ENCODE measurements at regions of chr16 and their contacts with region 1.

Region 1: DNA sequence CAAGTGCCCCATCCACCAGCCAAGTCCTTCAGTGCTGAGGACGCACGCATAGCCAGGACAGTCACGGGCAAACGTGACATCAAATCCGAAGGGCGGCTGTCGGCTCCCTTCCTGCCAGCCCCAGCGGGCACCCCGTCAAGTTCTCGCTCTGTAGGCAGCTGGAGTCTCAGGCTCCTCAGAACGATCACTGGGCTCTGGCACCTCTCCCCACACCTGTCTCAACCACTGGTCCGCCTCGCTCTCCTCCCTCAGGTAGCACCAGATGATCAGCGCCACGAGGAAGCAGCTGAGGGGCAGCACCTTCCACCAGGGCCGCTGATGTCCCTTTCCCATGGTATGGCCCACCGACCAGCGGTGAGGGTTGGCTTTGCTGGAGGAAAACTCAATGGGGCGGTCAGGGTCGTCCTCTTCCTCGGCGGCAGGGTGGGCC is 421 bp downstream of the UQCC4 start:
- DNase-seq: peak in 1 of 9 donors; percentile 30
- ATAC-seq: no peak
- H3K4me3 ChIP-seq: peak overlapping the region; percentile 66
- H3K4me3 Mint-ChIP-seq: peak overlapping the region; percentile 90 to 94 (median 92)
- H3K27ac ChIP-seq: peak overlapping the region; percentile 95
- H3K27ac Mint-ChIP-seq: peak overlapping the region; percentile 25 to 98 (median 98)
- H3K4me1 ChIP-seq: peaks cover 6 to 11% of the 10 kb centered on the region in 2 donors
- H3K4me1 Mint-ChIP-seq: peaks cover 4 to 31% (median 20%) of the 10 kb centered on the region in 7 donors
- H3K27me3 ChIP-seq: no peaks in the 10 kb centered on the region
- H3K27me3 Mint-ChIP-seq: peaks cover 0 to 5% (median 0%) of the 10 kb centered on the region in 5 donors

Region 2: DNA sequence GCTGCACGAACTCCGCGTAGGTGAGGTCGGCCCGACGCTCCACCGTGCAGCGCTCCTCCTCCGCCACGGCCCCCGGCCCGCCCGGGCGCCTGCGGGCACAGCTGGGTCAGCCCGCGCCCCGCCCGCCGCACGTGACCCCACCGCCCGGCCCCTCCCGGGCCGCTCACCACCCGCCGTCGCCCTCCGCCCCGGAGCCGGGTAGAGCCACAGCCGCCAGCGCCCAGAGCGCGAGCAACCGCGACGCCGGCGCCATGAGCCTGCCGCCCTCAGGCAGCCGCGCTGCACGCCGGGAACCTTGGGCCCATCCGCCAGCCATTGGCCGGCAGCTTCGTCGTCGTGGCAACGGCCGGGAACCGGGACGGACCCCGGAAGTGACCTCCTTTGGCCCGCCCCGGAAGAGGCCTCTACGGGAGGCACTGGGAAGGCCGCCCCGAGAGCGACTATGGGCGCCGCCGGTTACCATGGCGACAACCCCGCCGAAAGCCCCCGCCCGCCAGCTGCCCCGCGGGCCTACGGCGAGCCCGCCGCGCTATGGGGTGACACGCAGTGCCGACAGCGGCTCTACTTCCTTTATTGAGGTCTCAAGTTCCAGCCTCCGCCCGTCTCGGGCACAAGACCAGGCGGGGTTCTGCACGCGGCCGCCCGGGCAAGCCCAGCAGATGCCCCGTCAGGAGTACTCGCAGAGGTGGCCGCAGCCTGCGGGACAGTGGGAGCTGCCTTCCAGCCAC is 735.9 kb before region 1 on chr16 and contains the start of gene JMJD8:
- CTCF ChIA-PET with region 1: no interaction called
- POLR2A ChIA-PET with region 1: no interaction called
- intact Hi-C with region 1: loop called in 1 of 2 experiments (anchors 5 kb)
- DNase-seq: peak; percentile 88 to 97 (median 91)
- ATAC-seq: peak; percentile 75
- H3K4me3 ChIP-seq: peak within 1 kb of the TSS; percentile 52
- H3K4me3 Mint-ChIP-seq: peak within 1 kb of the TSS; percentile 58 to 87 (median 76)
- H3K27ac ChIP-seq: peak within 1 kb of the TSS; percentile 78
- H3K27ac Mint-ChIP-seq: peak within 1 kb of the TSS in 6 of 9 donors; percentile 38 to 82 (median 58)
- H3K4me1 ChIP-seq: peaks cover 9 to 36% of the 10 kb centered on the region in 2 donors
- H3K4me1 Mint-ChIP-seq: peaks cover 10 to 31% (median 22%) of the 10 kb centered on the region in 7 donors
- H3K27me3 ChIP-seq: no peaks in the 10 kb centered on the region
- H3K27me3 Mint-ChIP-seq: no peaks in the 10 kb centered on the region
- total RNA-seq, gene JMJD8: 26.8 to 48.1 (median 37.2) TPM

Region 3: GRCh38 chr16:1395444-1396031 is 24.6 kb before region 1 on chr16:
- CTCF ChIA-PET with region 1: no interaction called
- POLR2A ChIA-PET with region 1: no interaction called
- intact Hi-C with region 1: no loop called
- DNase-seq: no peak
- ATAC-seq: no peak
- H3K4me3 ChIP-seq: no peak overlapping the region
- H3K4me3 Mint-ChIP-seq: no peak overlapping the region
- H3K27ac ChIP-seq: no peak overlapping the region
- H3K27ac Mint-ChIP-seq: no peak overlapping the region
- H3K4me1 ChIP-seq: no peaks in the 10 kb centered on the region
- H3K4me1 Mint-ChIP-seq: peaks cover 0 to 2% (median 0%) of the 10 kb centered on the region in 7 donors
- H3K27me3 ChIP-seq: no peaks in the 10 kb centered on the region
- H3K27me3 Mint-ChIP-seq: no peaks in the 10 kb centered on the region

Region 4: DNA sequence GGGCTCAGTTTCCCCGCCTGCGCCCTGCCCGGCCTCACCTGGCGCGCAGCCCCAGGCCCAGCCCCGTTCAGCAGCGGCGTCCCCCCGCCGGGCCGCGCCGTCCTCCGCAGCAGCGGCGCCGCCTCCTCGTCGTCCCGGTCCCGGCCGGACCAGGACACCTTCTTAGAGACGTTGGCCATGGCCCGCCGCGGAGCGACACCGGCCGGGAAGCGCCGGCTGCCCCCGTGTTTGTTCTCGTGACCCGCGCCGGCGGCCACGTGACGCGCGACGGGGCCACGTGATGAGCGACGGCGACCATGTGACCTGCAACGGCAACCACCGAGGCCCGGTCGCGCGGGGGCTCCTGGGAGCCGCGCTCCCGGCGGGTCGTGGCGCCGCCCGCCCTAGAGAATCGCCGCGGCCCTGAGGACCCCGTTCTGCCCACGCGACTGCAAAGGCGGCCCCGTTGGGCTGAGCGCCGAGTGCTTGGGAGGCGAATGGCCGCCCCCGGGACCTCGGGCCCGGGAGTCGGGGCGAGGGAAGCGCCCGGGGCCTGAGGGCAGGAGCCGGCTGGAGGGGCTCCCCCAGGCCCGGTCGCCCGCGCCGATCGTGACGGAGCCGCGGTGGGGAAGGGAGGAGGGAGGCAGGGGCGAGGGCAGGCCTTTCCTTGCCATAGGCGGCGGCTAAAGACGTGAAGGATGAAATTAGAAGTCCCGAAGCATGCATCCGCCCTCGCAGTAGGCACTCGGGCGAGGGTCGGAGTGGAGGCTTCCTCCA is 54.8 kb after region 1 on chr16 and contains the start of gene CLCN7:
- CTCF ChIA-PET with region 1: no interaction called
- POLR2A ChIA-PET with region 1: interaction called, 3 read pairs
- intact Hi-C with region 1: loop called (anchors 1 to 2 kb)
- DNase-seq: peak; percentile 79 to 95 (median 84)
- ATAC-seq: peak; percentile 91
- H3K4me3 ChIP-seq: peak within 1 kb of the TSS; percentile 67
- H3K4me3 Mint-ChIP-seq: peak within 1 kb of the TSS; percentile 80 to 90 (median 85)
- H3K27ac ChIP-seq: peak within 1 kb of the TSS; percentile 100
- H3K27ac Mint-ChIP-seq: peak within 1 kb of the TSS; percentile 77 to 95 (median 88)
- H3K4me1 ChIP-seq: peaks cover 13 to 20% of the 10 kb centered on the region in 2 donors
- H3K4me1 Mint-ChIP-seq: peaks cover 18 to 52% (median 42%) of the 10 kb centered on the region in 7 donors
- H3K27me3 ChIP-seq: no peaks in the 10 kb centered on the region
- H3K27me3 Mint-ChIP-seq: no peaks in the 10 kb centered on the region
- total RNA-seq, gene CLCN7: 74.8 to 140 (median 115) TPM

Region 5: DNA sequence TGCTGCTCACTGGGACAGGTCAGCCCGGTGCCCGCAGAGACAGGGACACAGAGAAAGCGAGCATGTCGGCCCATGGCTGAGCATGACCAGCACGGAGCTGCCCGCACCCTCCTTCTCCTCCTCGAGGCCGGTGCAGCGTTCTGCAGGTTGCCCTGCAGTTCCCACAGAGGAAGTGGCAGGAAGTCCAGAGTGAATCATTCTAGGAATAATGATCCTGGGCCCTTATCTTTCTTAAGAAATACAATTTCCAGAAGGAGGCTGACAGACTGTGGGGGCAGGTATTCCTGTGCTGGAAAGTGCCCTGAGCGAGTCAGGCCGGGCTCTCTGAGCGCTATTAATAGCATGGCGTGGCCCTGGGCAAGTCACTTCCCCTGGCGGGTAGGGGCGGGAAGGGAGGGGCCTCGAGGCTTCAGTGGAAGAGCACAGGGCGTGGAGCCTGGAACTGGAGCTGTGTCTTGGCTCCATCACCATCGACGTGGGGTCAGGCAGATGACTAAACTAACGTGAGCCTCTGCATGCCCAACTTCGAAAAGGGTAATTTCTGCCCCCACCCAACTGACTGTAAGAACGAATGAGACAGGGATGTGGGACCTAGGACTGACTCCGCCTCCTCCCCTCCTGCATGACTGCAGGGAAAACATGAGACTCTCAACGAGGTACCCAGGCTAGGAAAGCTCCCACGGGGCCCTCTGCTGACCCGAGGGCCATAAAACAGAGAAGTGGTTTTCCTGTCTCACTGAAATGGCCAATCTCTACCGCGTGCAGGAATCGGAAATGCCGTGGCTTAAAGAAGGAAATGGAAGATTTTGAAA is 123.2 kb after region 1 on chr16:
- CTCF ChIA-PET with region 1: no interaction called
- POLR2A ChIA-PET with region 1: interaction called, 5 read pairs
- intact Hi-C with region 1: loop called in 1 of 2 experiments (anchors 2 kb)
- DNase-seq: peak in 5 of 9 donors; percentile 23 to 59 (median 38)
- ATAC-seq: peak; percentile 81
- H3K4me3 ChIP-seq: no peak overlapping the region
- H3K4me3 Mint-ChIP-seq: peak overlapping the region; percentile 70 to 86 (median 76)
- H3K27ac ChIP-seq: peak overlapping the region; percentile 51
- H3K27ac Mint-ChIP-seq: peak overlapping the region; percentile 71 to 95 (median 86)
- H3K4me1 ChIP-seq: peaks cover 13 to 70% of the 10 kb centered on the region in 2 donors
- H3K4me1 Mint-ChIP-seq: peaks cover 51 to 89% (median 66%) of the 10 kb centered on the region in 7 donors
- H3K27me3 ChIP-seq: no peaks in the 10 kb centered on the region
- H3K27me3 Mint-ChIP-seq: no peaks in the 10 kb centered on the region

Region 6: DNA sequence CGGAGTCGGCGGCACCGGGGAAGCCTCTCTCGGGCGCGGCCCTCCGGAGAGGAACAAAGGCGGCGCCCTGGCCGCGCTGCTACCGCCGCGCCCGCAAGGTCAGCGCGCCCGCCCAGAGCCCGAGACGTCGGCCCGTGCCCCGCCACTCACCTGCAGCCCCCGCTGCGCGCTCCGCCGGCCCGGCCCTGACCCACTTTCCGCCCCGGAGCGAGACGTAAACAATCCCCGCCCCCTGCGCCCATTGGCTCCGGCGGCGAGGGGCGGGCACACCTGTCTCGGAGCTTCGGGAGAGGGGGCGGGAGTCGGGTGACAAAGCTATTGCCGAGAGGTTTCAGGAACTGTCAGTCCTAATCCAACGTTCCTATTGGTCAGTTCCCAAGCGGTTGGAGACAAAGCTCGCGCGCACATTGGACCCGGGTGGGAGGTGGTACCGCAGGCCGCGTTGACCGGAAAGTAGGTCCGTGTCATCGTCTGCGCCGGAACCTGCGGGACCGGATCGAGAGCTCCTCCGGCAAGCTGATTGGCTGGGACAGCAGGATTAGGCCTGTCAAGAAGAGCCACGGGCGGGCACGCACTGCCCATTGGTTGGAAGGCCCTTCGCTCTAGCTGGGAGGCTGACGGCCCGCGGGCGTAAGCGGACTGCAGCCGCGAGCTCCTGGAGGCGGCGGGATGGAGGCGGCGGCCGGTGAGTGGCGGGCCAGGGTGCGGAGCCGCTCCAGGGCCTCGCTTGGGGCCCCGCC is 362.4 kb after region 1 on chr16 and contains the starts of genes NUBP2 and SPSB3:
- CTCF ChIA-PET with region 1: no interaction called
- POLR2A ChIA-PET with region 1: interaction called, 10 read pairs
- intact Hi-C with region 1: loop called (anchors 1 to 10 kb)
- DNase-seq: peak; percentile 83 to 98 (median 97)
- ATAC-seq: peak; percentile 92
- H3K4me3 ChIP-seq: peak within 1 kb of the TSS; percentile 92
- H3K4me3 Mint-ChIP-seq: peak within 1 kb of the TSS; percentile 90 to 98 (median 94)
- H3K27ac ChIP-seq: peak within 1 kb of the TSS; percentile 76
- H3K27ac Mint-ChIP-seq: peak within 1 kb of the TSS; percentile 77 to 98 (median 93)
- H3K4me1 ChIP-seq: peaks cover 13 to 28% of the 10 kb centered on the region in 2 donors
- H3K4me1 Mint-ChIP-seq: peaks cover 0 to 48% (median 22%) of the 10 kb centered on the region in 7 donors
- H3K27me3 ChIP-seq: no peaks in the 10 kb centered on the region
- H3K27me3 Mint-ChIP-seq: peaks cover 0 to 2% (median 0%) of the 10 kb centered on the region in 5 donors
- total RNA-seq, gene NUBP2: 39.3 to 60.2 (median 48.6) TPM
- total RNA-seq, gene SPSB3: 38.2 to 127 (median 72.3) TPM

Region 7: GRCh38 chr16:2009789-2010510 is 589.8 kb after region 1 on chr16 and contains the start of gene ZNF598:
- CTCF ChIA-PET with region 1: no interaction called
- POLR2A ChIA-PET with region 1: no interaction called
- intact Hi-C with region 1: no loop called
- DNase-seq: peak; percentile 64 to 87 (median 78)
- ATAC-seq: peak; percentile 97
- H3K4me3 ChIP-seq: peak within 1 kb of the TSS; percentile 77
- H3K4me3 Mint-ChIP-seq: peak within 1 kb of the TSS; percentile 87 to 94 (median 92)
- H3K27ac ChIP-seq: peak within 1 kb of the TSS; percentile 91
- H3K27ac Mint-ChIP-seq: peak within 1 kb of the TSS; percentile 85 to 99 (median 97)
- H3K4me1 ChIP-seq: peaks cover 26 to 29% of the 10 kb centered on the region in 2 donors
- H3K4me1 Mint-ChIP-seq: peaks cover 22 to 39% (median 32%) of the 10 kb centered on the region in 7 donors
- H3K27me3 ChIP-seq: no peaks in the 10 kb centered on the region
- H3K27me3 Mint-ChIP-seq: no peaks in the 10 kb centered on the region
- total RNA-seq, gene ZNF598: 44.3 to 63.2 (median 49.8) TPM

Measured in naive thymus-derived CD4-positive, alpha-beta T cell (primary cell).